ENCODE measurements at regions of chr18 and their contacts with region 1.

Region 1: DNA sequence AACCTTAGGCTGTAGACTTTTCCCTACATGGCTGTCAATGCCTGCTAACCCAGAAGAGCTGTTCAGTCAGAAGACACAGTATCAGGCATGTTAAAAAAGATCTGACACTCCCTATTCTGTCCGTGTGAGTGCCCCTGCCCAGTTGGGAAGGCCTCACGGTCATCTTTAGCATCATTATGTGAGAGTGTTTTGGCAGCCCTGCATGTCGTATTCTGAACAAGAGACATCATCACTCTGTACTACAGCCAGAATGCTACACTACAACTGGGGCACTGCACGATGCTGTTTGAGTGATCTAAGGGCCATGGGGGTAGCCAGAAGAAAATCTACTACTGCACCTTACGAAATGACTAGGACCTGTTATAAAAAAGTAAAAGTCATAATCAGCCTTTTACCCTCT is 67.2 kb downstream of the GREB1L start:
- DNase-seq: no peak
- H3K4me3 ChIP-seq: no peak overlapping the region
- H3K27ac ChIP-seq: no peak overlapping the region
- H3K4me1 ChIP-seq: no peaks in the 10 kb centered on the region
- H3K27me3 ChIP-seq: no peaks in the 10 kb centered on the region
- CTCF ChIP-seq: no peak
- POLR2A ChIP-seq: no peak

Region 2: DNA sequence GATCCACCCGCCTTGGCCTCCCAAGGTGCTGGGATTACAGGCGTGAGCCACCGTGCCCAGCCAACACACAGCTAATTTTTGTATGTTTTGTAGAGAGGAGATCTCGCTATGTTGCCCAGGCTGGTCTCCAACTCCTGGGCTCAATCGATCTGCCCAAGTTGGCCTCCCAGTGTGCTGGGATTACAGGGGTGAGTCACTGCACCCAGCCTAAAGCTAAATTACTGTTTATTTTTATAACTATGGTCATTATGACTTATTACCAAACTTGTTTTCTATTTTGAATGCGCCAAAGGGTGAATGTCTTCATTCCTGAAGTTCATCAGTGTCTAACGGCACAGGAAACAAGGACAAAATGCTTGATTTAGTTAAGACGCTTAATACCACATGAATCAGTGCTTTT is 106.2 kb before region 1 on chr18:
- intact Hi-C with region 1: no loop called
- DNase-seq: no peak
- H3K4me3 ChIP-seq: no peak overlapping the region
- H3K27ac ChIP-seq: no peak overlapping the region
- H3K4me1 ChIP-seq: no peaks in the 10 kb centered on the region
- H3K27me3 ChIP-seq: no peaks in the 10 kb centered on the region
- CTCF ChIP-seq: no peak
- POLR2A ChIP-seq: no peak

Region 3: GRCh38 chr18:21230436-21230835 is 78.8 kb before region 1 on chr18:
- intact Hi-C with region 1: no loop called
- DNase-seq: no peak
- H3K4me3 ChIP-seq: no peak overlapping the region
- H3K27ac ChIP-seq: no peak overlapping the region
- H3K4me1 ChIP-seq: no peaks in the 10 kb centered on the region
- H3K27me3 ChIP-seq: no peaks in the 10 kb centered on the region
- CTCF ChIP-seq: no peak
- POLR2A ChIP-seq: no peak

Region 4: DNA sequence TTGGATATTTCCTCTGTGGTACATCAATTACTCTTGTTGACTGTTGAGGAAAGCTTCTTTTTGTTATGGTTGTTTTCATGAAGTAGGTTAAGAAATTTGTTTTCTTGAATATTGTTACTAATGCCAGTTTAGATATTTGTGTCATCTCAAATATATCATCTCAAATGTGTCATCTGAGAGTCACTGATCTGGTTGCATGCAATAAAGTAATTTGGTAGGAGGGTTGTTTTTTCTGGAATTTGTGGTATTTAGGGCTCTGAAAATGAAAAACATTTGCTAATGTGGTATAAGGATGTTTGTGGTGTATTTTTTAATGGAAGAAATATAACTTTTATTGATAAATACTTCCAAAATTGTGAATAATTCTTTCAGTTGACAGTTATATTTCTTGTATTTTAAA is 50.5 kb after region 1 on chr18:
- intact Hi-C with region 1: loop called in 1 of 2 experiments (anchors 5 kb)
- DNase-seq: no peak
- H3K4me3 ChIP-seq: no peak overlapping the region
- H3K27ac ChIP-seq: no peak overlapping the region
- H3K4me1 ChIP-seq: no peaks in the 10 kb centered on the region
- H3K27me3 ChIP-seq: no peaks in the 10 kb centered on the region
- CTCF ChIP-seq: no peak
- POLR2A ChIP-seq: no peak

Measured in adrenal gland (tissue), 19 donors.